Heart right ventricle (tissue), 16 donors: ENCODE measurements at regions of chr1 and their contacts with region 1.

Region 1: DNA sequence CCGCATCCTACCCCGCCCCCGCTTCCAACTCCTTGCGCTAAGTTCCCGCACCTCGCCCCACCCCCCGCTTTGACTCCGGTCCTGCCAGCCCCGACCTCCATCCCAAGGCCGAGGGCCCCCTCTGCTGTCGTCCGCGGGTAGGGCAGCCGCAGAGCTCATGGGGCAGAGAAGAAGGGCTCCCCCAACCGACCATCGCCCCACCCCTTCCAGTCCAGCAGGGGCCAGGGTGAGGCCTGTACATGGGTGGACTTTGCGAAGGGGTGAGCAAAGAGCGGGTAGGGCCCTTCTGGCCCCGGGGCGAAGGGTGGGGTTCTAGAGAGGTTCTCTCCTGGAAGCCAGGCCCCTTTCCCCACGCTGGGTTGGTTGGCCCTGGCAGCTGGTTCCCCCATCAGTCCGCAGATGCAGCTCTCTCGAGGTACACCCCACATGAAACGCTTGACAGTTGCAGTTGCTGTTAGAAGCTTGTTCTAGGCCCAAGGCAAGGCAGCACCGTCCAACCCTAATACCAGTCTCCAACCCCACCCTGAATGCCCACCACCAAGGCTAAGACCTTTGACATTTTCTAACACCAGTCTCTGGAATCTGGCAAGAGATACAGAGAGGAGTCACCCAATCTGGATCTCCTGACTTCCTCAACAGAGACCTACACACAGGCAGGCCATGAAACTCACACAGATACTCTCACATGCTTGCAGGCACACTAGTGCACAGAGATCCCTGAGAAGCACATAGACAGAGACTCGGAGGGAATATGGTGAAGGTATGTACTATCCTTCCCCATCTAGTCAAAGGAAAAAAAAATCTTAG is 25.3 kb upstream of the ADGRB2 start:
- DNase-seq: peak; percentile 95 to 97
- ATAC-seq: peak; percentile 86 to 95 (median 92)
- H3K4me3 ChIP-seq: peak overlapping the region; percentile 41 to 93 (median 66)
- H3K27ac ChIP-seq: peak overlapping the region in 6 of 10 donors; percentile 58 to 90 (median 82)
- H3K4me1 ChIP-seq: peaks cover 0 to 18% (median 8%) of the 10 kb centered on the region in 9 donors
- H3K27me3 ChIP-seq: peaks cover 0 to 9% (median 0%) of the 10 kb centered on the region in 7 donors
- CTCF ChIP-seq: peak; percentile 81 to 89 (median 87)

Region 2: GRCh38 chr1:31564134-31564989 is 225.1 kb before region 1 on chr1:
- intact Hi-C with region 1: loop called in 9 of 10 experiments (anchors 5 to 10 kb)
- DNase-seq: no peak
- ATAC-seq: peak; percentile 39 to 72 (median 58)
- H3K4me3 ChIP-seq: no peak overlapping the region
- H3K27ac ChIP-seq: peak overlapping the region in 2 of 10 donors; percentile 31 to 48
- H3K4me1 ChIP-seq: peaks cover 0 to 24% (median 8%) of the 10 kb centered on the region in 9 donors
- H3K27me3 ChIP-seq: peaks cover 0 to 14% (median 0%) of the 10 kb centered on the region in 7 donors
- CTCF ChIP-seq: peak; percentile 77 to 94 (median 87)

Region 3: DNA sequence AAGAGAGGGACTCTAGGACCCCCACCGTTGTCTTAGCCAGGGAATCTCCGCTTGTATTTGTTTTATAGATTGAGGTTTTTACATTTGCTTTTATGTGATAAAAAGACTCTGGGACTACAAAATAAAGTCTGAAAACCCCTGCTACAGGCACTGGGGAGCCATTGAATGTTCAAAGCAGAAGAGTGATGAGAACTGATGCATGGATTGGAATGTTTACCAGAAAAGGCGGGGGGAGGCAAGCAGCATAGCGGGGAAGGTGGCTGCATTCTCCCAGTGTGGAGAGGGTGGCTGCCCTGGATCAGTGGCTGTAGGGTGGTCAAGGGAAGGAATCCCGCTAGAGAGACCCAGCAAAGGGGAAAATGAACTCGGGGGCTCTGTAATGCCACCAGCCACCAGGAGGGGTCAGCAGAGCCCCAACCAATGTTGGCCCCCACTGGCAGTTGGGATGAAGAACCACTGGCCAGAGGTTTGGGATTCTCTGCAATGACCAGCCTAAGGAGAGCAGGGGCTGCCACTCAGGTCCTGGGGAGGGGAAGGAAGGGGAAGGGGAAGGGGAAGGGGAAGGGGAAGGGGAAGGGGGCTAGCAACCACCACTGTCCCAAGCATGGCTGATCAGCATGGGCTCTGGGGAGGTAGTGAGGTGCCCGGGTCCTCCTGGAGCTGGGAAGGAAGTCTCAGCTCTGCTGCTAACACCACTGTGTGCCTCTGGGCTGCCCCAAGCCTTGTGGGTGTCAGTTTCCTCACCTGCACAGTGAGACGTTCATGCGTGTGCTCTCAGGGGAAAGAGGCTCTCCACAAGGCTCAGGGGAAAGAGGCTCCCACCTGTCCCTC is 125.6 kb before region 1 on chr1:
- intact Hi-C with region 1: loop called (anchors 1 to 5 kb)
- DNase-seq: peak; percentile 62 to 69
- ATAC-seq: peak in 7 of 8 donors; percentile 33 to 66 (median 52)
- H3K4me3 ChIP-seq: no peak overlapping the region
- H3K27ac ChIP-seq: no peak overlapping the region
- H3K4me1 ChIP-seq: peaks cover 6 to 26% (median 15%) of the 10 kb centered on the region in 9 donors
- H3K27me3 ChIP-seq: no peaks in the 10 kb centered on the region
- CTCF ChIP-seq: peak; percentile 83 to 92 (median 89)

Region 4: DNA sequence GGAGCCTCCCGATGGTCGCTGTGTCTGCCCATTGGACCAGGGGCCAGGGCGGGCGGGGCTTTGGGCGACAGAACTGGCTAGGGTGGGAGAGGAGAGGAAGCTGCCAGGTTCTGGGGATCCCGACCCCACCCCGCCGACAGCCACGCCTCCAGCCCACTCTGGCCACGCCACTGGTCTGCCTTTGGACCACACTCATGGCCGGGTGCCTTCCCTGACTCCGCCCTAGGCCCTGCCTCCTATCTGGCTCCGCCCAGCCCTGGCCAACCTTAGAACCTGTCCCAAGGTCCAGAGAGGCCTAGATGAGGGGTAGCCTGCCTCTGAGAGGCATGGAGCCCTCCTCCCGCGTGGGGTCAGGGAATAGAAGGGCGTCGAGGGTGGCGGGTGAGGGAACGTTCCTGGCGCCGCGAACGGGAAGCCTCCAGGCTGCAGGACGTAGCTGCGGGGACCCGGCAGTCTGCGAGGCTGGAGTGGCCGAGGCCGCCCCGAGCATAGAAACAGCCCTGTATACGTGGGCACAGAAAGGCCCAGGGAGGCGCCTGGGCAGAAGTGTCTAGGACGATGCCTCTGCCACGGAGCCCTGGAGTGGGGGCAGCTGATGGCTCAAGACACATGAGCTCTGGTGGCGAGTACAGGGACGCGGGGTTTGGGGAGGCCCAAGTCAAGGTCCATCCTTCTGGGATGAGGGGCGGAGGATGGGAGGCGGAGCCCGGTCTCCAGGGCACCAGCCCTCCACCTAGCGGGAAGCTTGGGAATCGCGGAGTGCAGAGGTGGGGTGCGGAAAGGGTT is 74.2 kb before region 1 on chr1:
- intact Hi-C with region 1: loop called in 7 of 10 experiments (anchors 1 to 10 kb)
- DNase-seq: peak; percentile 96
- ATAC-seq: peak; percentile 95 to 98 (median 96)
- H3K4me3 ChIP-seq: peak overlapping the region; percentile 31 to 65 (median 50)
- H3K27ac ChIP-seq: peak overlapping the region; percentile 90 to 99 (median 92)
- H3K4me1 ChIP-seq: peaks cover 10 to 45% (median 29%) of the 10 kb centered on the region in 9 donors
- H3K27me3 ChIP-seq: peaks cover 0 to 28% (median 0%) of the 10 kb centered on the region in 7 donors
- CTCF ChIP-seq: peak; percentile 79 to 98 (median 92)

Region 5: DNA sequence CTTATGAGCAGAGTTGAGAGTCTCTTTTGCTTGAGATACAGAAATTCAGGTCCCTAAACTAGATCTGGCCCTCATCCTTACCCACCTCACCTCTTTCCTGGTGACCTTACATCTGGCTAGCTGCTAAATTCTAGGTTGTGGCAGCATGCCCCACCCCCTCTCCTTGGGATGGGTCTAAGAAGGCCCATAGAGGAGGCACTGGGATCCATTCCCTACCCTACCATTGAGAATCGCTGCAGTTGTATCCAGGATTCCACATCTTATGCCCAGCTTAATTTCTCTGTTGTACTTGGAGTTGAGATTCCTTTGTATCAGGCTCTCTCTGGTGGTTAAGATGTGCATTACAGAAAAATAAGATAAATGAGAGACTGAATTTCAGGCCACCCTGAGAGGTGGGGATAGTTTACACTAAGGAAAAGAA is 273.8 kb after region 1 on chr1:
- intact Hi-C with region 1: loop called in 1 of 10 experiments (anchors 10 kb)
- DNase-seq: no peak
- ATAC-seq: peak; percentile 5 to 53 (median 44)
- H3K4me3 ChIP-seq: no peak overlapping the region
- H3K27ac ChIP-seq: peak overlapping the region in 6 of 10 donors; percentile 33 to 73 (median 52)
- H3K4me1 ChIP-seq: peaks cover 8 to 32% (median 28%) of the 10 kb centered on the region in 9 donors
- H3K27me3 ChIP-seq: no peaks in the 10 kb centered on the region
- CTCF ChIP-seq: peak in 8 of 9 donors; percentile 49 to 71 (median 60)